HEK293 (cell line): ENCODE measurements at regions of chr1 and their contacts with region 1.

Region 1: GRCh38 chr1:216221260-216221700 is 202.0 kb downstream of the USH2A start:
- H3K4me3 ChIP-seq: peak overlapping the region; percentile 28
- H3K27ac ChIP-seq: no peak overlapping the region
- H3K4me1 ChIP-seq: no peaks in the 10 kb centered on the region
- CTCF ChIP-seq: 0 out of 2 replicates have a peak, but pooled peaks have one; percentile 26

Region 2: DNA sequence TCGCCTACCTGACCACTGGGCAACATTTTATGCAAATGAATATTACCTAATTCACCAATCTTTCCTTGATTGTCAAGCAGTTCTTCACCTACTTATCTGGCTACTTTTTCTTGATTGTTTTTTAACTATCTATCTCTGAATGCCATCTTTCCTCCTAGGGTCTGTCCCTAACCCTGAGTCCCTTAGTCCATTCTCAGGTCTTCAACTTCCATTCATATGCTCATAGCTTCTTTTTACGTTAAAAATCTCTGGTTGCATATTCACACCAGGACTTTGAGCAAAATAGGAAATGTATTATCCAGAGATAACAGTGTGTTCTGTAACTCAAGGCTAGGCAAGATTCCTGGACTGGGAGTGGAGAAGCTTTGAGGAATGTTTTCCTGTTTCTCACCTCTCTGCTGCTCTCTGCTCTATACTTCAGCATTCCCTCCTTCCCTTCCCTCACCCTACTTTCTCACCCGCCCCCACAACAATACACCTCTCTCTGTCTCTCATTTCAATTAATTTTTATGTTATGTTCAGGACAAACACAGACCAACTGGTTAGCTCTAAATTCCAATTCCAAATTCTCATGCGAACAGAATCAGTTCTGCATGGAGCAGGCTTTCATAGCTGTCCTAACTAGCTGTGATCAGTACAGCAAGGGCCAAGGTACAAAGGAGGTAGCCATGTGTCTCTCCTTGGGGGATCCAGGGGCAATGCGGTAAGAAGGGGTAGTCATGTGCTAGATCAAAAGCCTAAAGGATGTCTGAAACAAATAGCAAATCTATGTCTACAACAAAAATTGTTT is 76.4 kb before region 1 on chr1:
- CTCF ChIA-PET with region 1: no interaction called
- POLR2A ChIA-PET with region 1: no interaction called
- H3K4me3 ChIP-seq: no peak overlapping the region
- H3K27ac ChIP-seq: no peak overlapping the region
- H3K4me1 ChIP-seq: no peaks in the 10 kb centered on the region
- CTCF ChIP-seq: no peak

Region 3: GRCh38 chr1:216207154-216207553 is 14.1 kb before region 1 on chr1:
- CTCF ChIA-PET with region 1: interaction called, 11 read pairs
- POLR2A ChIA-PET with region 1: no interaction called
- H3K4me3 ChIP-seq: no peak overlapping the region
- H3K27ac ChIP-seq: no peak overlapping the region
- H3K4me1 ChIP-seq: no peaks in the 10 kb centered on the region
- CTCF ChIP-seq: no peak